Activated T-helper 1 cell treated with anti-CD3 and anti-CD28 coated beads, Interleukin-12 subunit alpha, Interleukin-12 subunit beta, Interleukin-2, Interleukin-4 antibody, amounts not matched to agents 30 ng/mL and 10 ng/mL and 1 ng/mL, durations not matched to agents 14 hours and 24 hours and 36 hours (primary cell): ENCODE measurements at regions of chr1 and their contacts with region 1.

Region 1: DNA sequence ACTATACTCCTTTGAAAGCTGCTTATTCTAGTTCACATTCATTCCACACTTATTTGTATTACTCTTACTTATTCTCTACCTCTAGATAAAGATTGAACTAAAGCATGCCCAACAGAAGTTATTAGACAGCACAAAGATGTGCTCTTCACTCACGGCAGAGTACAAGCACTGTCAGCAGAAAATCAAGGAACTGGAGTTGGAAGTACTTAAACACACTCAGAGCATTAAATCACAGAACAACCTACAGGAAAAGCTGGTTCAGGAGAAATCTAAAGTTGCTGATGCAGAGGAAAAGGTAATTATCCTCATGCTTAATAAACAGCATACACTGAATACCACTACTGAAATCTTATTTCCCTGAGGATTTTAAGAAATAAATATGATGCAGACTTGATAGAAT is 81.3 kb upstream of the PPIH start:
- DNase-seq: no peak
- H3K4me3 Mint-ChIP-seq: no peak overlapping the region
- H3K27ac Mint-ChIP-seq: no peak overlapping the region
- H3K4me1 Mint-ChIP-seq: no peaks in the 10 kb centered on the region
- H3K27me3 Mint-ChIP-seq: peaks cover 2% of the 10 kb centered on the region

Region 2: GRCh38 chr1:42601472-42601871 is 24.5 kb after region 1 on chr1:
- intact Hi-C with region 1: no loop called
- DNase-seq: no peak
- H3K4me3 Mint-ChIP-seq: no peak overlapping the region
- H3K27ac Mint-ChIP-seq: no peak overlapping the region
- H3K4me1 Mint-ChIP-seq: no peaks in the 10 kb centered on the region
- H3K27me3 Mint-ChIP-seq: peaks cover 12% of the 10 kb centered on the region

Region 3: GRCh38 chr1:42657971-42658879 is 81.3 kb after region 1 on chr1 and contains the start of gene PPIH:
- intact Hi-C with region 1: loop called (anchors 5 kb)
- DNase-seq: peak; percentile 94
- H3K4me3 Mint-ChIP-seq: peak within 1 kb of the TSS; percentile 99
- H3K27ac Mint-ChIP-seq: peak within 1 kb of the TSS; percentile 96
- H3K4me1 Mint-ChIP-seq: peaks cover 46% of the 10 kb centered on the region
- H3K27me3 Mint-ChIP-seq: peaks cover 3% of the 10 kb centered on the region
- total RNA-seq, gene PPIH: 89.7 and 94.6 TPM in 2 replicates

Region 4: GRCh38 chr1:42730988-42731387 is 154.1 kb after region 1 on chr1:
- intact Hi-C with region 1: loop called (anchors 1 kb)
- DNase-seq: no peak
- H3K4me3 Mint-ChIP-seq: no peak overlapping the region
- H3K27ac Mint-ChIP-seq: no peak overlapping the region
- H3K4me1 Mint-ChIP-seq: peaks cover 5% of the 10 kb centered on the region
- H3K27me3 Mint-ChIP-seq: no peaks in the 10 kb centered on the region

Region 5: GRCh38 chr1:42756956-42757891 is 180.3 kb after region 1 on chr1:
- intact Hi-C with region 1: loop called (anchors 1 kb)
- DNase-seq: no peak
- H3K4me3 Mint-ChIP-seq: no peak overlapping the region
- H3K27ac Mint-ChIP-seq: no peak overlapping the region
- H3K4me1 Mint-ChIP-seq: no peaks in the 10 kb centered on the region
- H3K27me3 Mint-ChIP-seq: no peaks in the 10 kb centered on the region

Region 6: GRCh38 chr1:43073490-43074230 is 496.7 kb after region 1 on chr1:
- intact Hi-C with region 1: loop called (anchors 1 kb)
- DNase-seq: peak; percentile 58
- H3K4me3 Mint-ChIP-seq: no peak overlapping the region
- H3K27ac Mint-ChIP-seq: no peak overlapping the region
- H3K4me1 Mint-ChIP-seq: peaks cover 6% of the 10 kb centered on the region
- H3K27me3 Mint-ChIP-seq: peaks cover 4% of the 10 kb centered on the region